ENCODE measurements at regions of chr16 and their contacts with region 1.

Region 1: GRCh38 chr16:74606521-74607310 is at the start of gene GLG1:
- DNase-seq: peak; percentile 81 to 93 (median 90)
- H3K4me3 ChIP-seq: peak within 1 kb of the TSS; percentile 55 to 100 (median 98)
- H3K27ac ChIP-seq: peak within 1 kb of the TSS; percentile 72 to 99 (median 94)
- H3K27me3 ChIP-seq: no peaks in the 10 kb centered on the region
- CTCF ChIP-seq: peak in 38 of 56 donors; percentile 5 to 57 (median 28)
- total RNA-seq, gene GLG1: 119 to 189 (median 147) TPM

Region 2: DNA sequence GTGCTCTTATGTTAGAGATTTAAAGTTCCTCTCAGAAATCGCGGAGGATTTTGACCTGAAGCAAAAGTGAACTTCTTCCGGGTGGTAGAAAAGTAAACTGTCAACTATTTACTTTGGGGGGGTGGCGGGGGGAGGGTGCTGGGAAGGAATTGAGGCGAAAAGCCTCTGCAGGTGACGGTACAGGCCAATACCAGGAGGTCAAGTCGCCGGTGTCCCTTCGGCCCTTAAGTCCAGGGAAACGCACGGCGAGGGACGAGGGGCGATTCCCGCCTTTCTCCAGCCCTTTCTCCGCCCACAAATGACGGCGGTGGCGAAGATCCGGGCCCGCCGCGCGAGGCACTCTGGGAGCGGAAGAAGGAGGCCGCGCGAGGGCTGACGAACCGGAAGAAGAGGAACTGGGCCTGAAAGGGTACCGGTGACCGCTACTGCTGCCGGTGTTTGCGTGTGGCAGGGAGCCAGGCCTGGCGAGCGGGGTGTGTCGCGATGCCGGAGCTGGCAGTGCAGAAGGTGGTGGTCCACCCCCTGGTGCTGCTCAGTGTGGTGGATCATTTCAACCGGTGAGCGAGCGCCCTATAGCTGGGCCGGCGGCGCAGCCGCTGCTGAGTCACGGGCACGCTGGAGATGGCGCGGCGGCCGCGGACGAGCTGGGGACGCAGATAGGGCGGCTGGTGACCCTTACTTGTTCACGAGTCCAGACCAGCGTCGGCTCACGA is 310.1 kb before region 1 on chr16 and contains the start of gene PSMD7:
- intact Hi-C with region 1: loop called (anchors 2 to 10 kb)
- DNase-seq: peak; percentile 81 to 96 (median 87)
- H3K4me3 ChIP-seq: peak within 1 kb of the TSS; percentile 68 to 100 (median 98)
- H3K27ac ChIP-seq: peak within 1 kb of the TSS; percentile 62 to 97 (median 91)
- H3K27me3 ChIP-seq: no peaks in the 10 kb centered on the region
- CTCF ChIP-seq: peak in 30 of 56 donors; percentile 2 to 53 (median 31)
- total RNA-seq, gene PSMD7: 46.4 to 109 (median 81.9) TPM

Region 3: DNA sequence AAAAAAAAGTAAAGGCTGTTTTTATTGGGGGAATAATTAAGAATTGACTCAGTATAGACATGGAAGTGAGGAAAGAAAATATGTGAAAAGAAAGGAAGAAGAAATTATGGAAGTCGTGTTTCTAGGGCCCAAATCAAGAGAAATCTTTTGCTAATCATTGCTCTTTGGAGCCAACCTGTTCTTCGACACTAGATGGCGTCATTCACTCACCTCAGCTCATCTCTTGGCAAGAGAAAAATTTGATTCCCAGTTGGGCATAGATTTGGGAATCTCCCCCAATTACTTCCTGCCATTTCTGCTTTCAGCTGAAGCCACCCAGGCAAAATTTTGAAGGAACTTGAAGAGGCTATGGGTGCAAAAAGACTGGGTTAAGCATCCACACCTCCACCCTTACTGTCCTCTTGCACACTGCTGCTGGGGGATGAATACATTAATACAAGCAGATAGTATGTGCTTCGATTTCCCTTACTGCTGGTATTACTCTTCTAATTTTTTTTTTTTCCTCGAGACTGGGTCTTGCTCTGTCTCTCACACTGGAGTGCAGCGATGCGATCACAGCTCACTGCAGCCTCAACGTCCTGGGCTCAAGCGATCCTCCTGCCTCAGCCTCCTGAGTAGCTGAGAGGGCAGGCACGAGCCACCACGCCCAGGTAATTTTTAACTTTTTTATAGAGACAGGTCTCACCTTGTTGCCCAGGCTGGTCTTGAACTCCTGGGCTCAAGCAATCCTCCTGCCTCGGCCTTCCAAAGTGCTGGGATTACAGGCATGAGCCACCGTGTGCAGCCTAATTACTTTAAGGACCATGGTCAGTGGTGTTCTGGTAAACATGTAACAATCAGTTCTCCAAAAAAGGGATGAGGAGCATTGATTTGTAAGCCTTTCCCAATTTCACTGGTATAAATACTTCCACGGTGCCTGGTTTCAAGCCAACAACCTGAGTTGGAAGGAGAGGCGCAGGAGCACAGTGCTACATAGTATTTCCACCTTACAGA is 296.6 kb before region 1 on chr16:
- intact Hi-C with region 1: loop called in 1 of 2 experiments (anchors 10 kb)
- DNase-seq: peak in 2 of 10 donors; percentile 24 to 28
- H3K4me3 ChIP-seq: no peak overlapping the region
- H3K27ac ChIP-seq: no peak overlapping the region
- H3K27me3 ChIP-seq: no peaks in the 10 kb centered on the region
- CTCF ChIP-seq: peak; percentile 35 to 81 (median 69)

Region 4: DNA sequence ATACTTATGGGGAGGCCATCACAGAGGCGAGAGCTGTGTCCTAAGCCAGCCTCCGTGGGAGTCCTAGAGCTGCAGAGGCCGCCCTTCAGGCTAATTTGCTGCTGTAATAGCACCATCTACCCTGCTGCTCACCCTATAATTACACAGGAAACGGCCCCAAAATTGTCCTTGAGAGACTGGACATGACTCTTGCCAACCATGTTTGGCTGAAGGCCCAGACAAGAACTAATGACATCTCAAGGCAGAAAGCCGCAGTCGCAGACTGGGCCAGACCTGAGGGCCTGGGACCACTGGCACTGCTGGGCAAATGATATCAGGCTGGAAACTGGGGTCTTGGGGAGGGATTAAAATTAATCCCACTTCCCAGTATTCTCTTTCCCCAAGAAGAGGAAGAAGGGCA is 286.0 kb before region 1 on chr16:
- intact Hi-C with region 1: no loop called
- DNase-seq: peak in 1 of 10 donors; percentile 59
- H3K4me3 ChIP-seq: no peak overlapping the region
- H3K27ac ChIP-seq: peak overlapping the region in 2 of 59 donors; percentile 18 to 37
- H3K27me3 ChIP-seq: no peaks in the 10 kb centered on the region
- CTCF ChIP-seq: no peak

Region 5: DNA sequence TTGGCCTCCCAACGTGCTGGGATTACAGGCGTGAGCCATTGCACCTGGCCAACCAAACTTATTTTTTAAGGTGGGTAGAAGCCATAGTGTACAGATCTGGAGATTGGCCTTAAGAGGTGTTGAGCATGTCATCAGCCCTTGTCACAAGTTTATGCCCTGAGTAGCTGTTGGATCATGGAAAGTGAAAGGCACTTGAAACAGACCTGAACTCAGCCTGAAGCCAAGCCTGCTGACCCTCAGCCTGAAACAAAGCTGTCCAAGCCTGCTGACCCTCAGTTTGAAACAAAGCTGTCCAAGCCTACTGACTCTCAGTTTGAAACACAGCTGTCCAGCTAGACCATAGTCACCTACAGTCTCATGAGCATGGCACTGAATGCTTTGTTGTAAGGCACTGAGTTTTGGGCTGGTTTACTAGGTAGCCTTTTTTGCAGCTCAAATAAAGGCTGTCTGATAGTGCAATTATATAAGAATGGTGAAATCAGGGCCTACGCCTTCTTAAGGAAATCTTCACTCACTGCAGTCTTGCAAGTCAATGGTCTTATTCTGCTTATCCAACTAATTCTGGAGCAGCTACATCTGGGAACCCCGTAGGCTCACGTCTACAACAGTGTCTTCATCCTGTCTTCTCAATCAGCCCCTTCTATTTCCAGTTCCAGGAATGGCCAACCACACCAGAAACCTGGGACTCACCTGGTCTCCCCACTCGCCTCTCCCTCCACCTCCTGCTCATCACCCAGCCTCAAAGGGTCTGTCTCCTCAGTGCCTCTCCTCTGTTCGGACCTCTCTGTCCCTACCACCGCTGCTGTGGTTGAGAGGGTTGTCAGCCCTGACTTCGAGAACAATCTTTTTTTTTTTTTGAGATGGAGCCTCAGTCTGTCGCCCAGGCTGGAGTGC is 233.5 kb before region 1 on chr16:
- intact Hi-C with region 1: loop called in 1 of 2 experiments (anchors 5 kb)
- DNase-seq: no peak
- H3K4me3 ChIP-seq: no peak overlapping the region
- H3K27ac ChIP-seq: no peak overlapping the region
- H3K27me3 ChIP-seq: no peaks in the 10 kb centered on the region
- CTCF ChIP-seq: no peak

Region 6: DNA sequence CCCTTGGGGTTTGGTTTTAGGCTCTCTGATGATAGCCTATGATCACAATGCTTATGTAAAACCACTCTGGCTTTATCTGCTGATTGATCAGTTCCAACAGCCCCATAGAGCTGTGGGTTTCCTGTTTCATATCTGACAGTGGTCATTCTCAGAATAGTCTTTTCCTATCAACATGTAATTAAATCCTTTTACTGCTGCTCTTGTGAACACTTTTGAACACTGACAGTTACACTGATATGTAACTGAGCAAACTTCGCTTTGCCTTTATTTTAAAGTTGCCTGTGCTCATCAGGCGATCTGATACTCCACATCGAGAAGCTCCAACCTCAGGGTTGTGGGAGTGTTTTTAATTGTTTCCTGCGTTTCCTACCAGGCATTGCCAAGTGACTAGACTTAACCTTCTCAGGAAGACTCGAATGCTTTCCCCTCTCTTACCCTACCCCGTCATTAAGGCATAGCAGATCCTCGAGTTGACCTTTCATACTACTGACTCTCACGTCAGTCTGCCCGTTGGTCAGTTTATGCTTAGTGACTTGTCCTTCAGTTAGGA is 168.1 kb before region 1 on chr16:
- intact Hi-C with region 1: loop called in 1 of 2 experiments (anchors 10 kb)
- DNase-seq: no peak
- H3K4me3 ChIP-seq: no peak overlapping the region
- H3K27ac ChIP-seq: no peak overlapping the region
- H3K27me3 ChIP-seq: no peaks in the 10 kb centered on the region
- CTCF ChIP-seq: no peak

Region 7: GRCh38 chr16:74448992-74449434 is 157.7 kb before region 1 on chr16:
- intact Hi-C with region 1: no loop called
- DNase-seq: no peak
- H3K4me3 ChIP-seq: no peak overlapping the region
- H3K27ac ChIP-seq: peak overlapping the region in 47 of 59 donors; percentile 0 to 88 (median 60)
- H3K27me3 ChIP-seq: no peaks in the 10 kb centered on the region
- CTCF ChIP-seq: no peak

Region 8: DNA sequence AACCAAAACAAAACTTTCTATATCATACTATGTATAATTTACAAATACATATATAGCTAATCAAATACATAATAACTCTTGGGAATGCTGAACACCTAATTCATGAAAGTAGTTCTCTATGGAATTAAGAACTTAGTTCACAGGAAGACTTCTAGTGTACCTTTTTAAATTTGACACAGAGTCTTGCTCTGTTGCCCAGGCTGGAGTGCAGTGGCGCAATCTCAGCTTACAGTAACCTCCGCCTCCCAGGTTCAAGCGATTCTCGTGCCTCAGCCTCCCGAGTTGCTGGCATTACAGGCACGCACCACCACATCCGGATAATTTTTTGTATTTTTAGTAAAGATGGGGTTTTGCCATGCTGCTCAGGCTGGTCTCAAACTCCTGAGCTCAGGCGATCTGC is 35.3 kb after region 1 on chr16:
- intact Hi-C with region 1: no loop called
- DNase-seq: no peak
- H3K4me3 ChIP-seq: no peak overlapping the region
- H3K27ac ChIP-seq: no peak overlapping the region
- H3K27me3 ChIP-seq: no peaks in the 10 kb centered on the region
- CTCF ChIP-seq: no peak

Region 9: GRCh38 chr16:74666425-74667254 is 59.9 kb after region 1 on chr16 and contains the start of gene RFWD3:
- intact Hi-C with region 1: loop called in 1 of 2 experiments (anchors 10 kb)
- DNase-seq: peak; percentile 90 to 99 (median 98)
- H3K4me3 ChIP-seq: peak within 1 kb of the TSS; percentile 55 to 99 (median 90)
- H3K27ac ChIP-seq: peak within 1 kb of the TSS in 39 of 59 donors; percentile 6 to 84 (median 50)
- H3K27me3 ChIP-seq: no peaks in the 10 kb centered on the region
- CTCF ChIP-seq: peak in 12 of 56 donors; percentile 7 to 35 (median 20)
- total RNA-seq, gene RFWD3: 8.3 to 26.1 (median 14.4) TPM

Region 10: DNA sequence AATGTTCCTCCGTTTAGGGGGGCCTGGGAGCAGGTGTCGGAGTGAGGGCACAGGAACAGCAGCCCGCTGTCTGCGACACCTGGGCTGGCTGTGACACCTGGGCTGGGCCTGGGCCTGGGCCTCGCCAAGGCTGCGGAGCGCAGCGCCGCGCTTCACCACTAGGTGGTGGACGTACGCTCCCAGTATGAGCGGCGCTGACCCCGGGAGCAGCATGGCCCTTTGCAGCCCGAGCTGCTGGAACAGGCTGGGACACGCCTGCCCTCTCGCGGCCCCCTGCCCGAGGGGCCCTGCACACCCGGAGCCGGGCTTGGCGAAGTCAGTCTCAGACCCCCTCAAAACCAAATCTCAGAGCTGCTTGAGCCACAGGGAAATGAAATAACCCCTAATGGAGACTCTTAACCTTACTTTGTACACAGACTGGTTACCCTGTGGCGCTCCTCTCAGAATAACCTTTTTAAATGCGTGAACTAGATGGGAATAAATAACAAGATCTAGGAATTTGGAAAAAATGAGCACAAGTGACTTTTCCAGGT is 206.5 kb after region 1 on chr16:
- intact Hi-C with region 1: no loop called
- DNase-seq: peak; percentile 58 to 84 (median 78)
- H3K4me3 ChIP-seq: peak overlapping the region in 2 of 59 donors; percentile 10 to 23
- H3K27ac ChIP-seq: peak overlapping the region in 55 of 59 donors; percentile 4 to 90 (median 71)
- H3K27me3 ChIP-seq: no peaks in the 10 kb centered on the region
- CTCF ChIP-seq: peak; percentile 45 to 100 (median 95)

Measured in dorsolateral prefrontal cortex (tissue), 120 donors.